GM23248 (cell line): ENCODE measurements at regions of chr17 and their contacts with region 1.

Region 1: DNA sequence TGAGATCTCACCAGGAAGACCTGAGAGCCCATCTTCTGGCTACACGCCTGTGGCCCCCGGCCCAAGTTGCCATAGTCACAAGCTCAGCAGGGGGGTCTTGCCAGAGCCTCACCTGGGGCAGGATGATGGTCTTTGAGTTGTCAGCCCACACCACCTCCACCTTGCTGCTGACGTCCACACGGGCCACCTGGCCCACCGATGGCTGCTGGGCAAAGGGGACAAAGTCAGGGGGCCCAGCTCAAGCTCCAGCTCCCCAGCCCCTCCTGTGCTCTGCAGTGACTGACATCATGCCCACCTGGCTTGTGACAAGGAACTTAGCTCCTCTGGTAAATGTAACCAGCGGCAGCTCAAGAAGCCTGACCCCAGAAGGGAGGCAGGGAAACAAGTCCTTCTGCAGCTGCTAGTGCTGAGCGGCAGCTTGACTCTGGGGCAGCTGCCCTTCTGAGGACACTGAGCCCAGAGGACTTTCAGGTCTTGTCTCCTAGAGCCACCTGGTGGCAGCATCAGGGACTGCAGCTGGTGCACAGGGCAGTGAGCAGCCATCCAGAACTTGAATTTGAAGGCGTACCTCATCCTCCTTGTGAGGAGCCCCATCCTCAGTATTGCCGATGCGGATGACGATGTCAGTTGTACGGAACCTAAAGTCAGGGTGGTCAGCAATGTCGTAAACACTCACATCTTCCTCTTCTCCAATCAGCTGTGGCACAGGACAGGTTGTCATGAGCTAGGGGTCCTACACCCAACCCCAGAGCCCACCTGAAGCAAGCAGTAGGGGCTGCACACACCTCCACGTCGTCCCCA is 13.5 kb downstream of the SPHK1 start:
- DNase-seq: peak; percentile 87
- H3K4me3 ChIP-seq: no peak overlapping the region
- H3K27ac ChIP-seq: no peak overlapping the region
- H3K4me1 ChIP-seq: no peaks in the 10 kb centered on the region
- H3K27me3 ChIP-seq: no peaks in the 10 kb centered on the region

Region 2: DNA sequence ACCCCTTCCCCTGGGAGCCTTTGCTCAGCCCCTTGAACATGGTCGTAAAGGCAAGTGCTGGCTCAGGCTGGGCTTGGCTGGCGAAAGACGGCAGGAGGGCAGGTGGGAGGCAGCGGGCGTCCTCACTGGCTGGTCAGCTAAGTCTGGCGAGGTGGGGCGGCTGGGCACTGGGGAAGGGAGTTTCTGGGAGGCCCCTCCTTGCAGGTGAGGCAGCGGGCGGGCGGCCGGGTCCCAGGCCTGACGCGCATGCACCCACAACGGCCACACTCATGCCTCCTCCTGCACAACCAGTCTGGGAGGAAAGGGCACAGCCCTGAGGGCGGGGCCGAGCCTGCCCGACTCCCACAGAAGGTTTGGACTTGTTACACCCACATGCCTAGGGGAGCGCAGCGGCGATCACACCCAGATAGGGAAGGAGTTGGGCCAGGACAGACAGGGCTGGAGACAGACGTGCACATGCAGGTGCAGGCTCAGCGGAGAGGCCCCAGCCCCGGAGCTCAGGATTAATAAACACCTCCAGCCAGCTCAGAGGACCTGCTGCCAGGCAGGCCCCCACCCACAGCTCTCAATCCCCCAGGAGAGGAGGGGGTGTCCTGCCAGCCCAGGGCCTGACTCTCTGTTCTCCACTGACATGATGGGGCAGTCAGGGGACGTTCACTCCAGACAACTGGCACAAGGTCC is 370.6 kb before region 1 on chr17 and contains the start of gene EVPL:
- in situ Hi-C with region 1: no loop called
- DNase-seq: no peak
- H3K4me3 ChIP-seq: no peak within 1 kb of the TSS
- H3K27ac ChIP-seq: no peak within 1 kb of the TSS
- H3K4me1 ChIP-seq: no peaks in the 10 kb centered on the region
- H3K27me3 ChIP-seq: no peaks in the 10 kb centered on the region
- total RNA-seq, gene EVPL: not detected in 2 replicates

Region 3: DNA sequence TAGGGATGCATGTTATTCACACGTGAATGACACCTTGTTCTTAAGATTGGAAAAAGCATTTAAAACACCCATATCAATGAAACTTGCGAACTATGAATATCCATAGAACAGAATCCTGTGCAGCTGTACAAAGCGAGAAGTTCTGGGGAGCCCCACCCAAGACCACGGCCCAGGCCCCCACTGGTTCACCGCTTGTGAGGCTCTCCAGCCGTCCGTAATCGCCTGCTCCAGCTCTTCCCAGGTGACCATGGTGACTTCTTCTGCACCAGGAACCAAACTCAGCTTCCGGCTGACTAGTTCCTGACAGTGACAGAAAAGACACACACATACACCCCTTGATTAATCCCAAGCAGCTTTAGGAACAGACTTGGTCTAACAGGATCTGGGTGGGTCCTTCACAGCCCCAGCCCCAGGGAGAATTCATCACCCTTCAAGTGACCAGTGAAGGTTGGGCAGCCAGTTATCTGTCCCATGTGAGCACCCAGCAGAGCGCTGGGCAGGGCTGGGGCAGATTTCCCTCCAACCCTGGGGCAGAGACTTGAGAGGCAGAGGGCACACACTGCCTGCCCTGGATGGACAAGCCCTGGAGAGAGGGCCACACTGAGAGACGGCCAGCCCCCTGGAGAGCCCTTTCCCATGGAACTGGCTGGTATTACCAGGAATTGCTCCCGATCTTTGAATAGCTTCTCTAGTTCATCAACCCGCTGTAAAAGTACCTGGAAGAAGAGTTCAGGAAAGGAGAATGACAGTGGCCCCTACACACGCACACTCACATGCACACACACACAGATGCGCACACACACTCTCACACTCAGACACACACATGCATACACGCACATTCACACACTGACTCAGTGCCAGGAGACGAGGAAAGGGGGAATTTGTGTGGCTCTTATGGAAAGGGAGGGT is 93.4 kb before region 1 on chr17:
- in situ Hi-C with region 1: loop called (anchors 5 kb)
- DNase-seq: no peak
- H3K4me3 ChIP-seq: no peak overlapping the region
- H3K27ac ChIP-seq: no peak overlapping the region
- H3K4me1 ChIP-seq: no peaks in the 10 kb centered on the region
- H3K27me3 ChIP-seq: no peaks in the 10 kb centered on the region

Region 4: DNA sequence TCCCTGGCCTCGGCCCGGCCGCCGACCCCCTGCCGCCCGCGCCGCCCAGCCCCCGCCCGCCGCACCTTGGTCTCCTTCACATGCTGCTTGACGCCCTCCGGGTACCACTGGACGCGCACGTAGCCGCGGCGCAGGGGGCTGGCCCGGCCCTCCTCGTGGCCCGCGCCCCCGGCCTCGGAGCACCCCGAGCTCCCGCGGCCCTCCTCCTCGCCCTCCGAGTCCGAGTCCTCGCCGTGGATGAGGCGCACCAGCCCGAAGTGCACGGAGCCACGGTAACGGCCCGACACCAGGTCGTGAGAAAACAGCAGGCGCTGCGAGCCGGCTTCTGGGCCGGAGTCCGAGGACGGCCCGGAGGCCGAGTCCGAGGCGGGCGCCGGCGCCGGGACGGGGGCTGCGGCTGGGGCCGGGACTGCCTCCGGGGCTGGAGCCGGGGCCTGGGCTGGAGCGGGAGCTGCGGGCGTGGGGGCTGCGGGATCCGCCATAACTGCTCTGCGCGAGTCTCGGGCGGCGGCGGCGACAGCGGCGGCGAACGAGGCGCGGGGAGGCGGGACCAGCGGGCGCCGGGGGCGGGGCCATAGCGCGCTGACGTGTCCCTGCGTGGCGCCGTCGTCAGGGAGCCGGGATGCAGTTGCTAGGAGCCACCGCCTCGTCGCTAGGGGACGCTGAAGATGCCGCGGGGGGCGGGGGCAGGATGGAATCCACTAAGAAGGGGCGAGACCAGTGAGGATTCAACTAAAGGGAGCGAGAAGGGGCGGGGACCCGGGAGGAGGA is 55.0 kb after region 1 on chr17 and contains the start of gene UBE2O:
- in situ Hi-C with region 1: no loop called
- DNase-seq: peak; percentile 96
- H3K4me3 ChIP-seq: peak within 1 kb of the TSS; percentile 85
- H3K27ac ChIP-seq: peak within 1 kb of the TSS; percentile 44
- H3K4me1 ChIP-seq: peaks cover 16% of the 10 kb centered on the region; the same call in 1 of the 2 replicates
- H3K27me3 ChIP-seq: no peaks in the 10 kb centered on the region
- total RNA-seq, gene UBE2O: 17.2 TPM in 2 replicates